GM12878 (cell line): ENCODE measurements at regions of chr5 and their contacts with region 1.

Region 1: DNA sequence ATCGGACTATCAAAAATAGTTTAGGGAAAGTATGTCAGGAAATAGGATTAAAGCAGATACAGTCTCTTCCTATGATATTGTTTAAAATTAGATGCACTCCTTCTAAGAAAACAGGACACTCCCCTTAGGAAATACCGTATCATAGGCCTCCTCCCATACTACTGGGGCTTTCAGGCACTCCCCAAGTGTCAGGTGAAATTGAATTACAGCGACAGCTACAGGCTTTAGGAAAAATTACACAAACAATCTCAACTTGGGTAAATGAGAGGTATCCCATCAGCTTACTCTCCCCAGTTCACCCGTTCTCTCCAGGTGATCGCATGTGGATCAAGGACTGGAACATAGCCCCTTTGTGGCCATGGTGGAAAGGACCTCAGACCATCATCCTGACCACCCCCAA is 110.4 kb upstream of the EPB41L4A start:
- DNase-seq: no peak
- ATAC-seq: peak; percentile 71
- H3K4me3 ChIP-seq: no peak overlapping the region
- H3K27ac ChIP-seq: no peak overlapping the region
- H3K4me1 ChIP-seq: peaks cover 26% of the 10 kb centered on the region
- H3K27me3 ChIP-seq: no peaks in the 10 kb centered on the region
- CTCF ChIP-seq: peak; percentile 57 to 61 (median 58); a peak in 5 of 6 replicates
- EP300 ChIP-seq: no peak
- POLR2A ChIP-seq: no peak
- RAD21 ChIP-seq: peak; percentile 65

Region 2: DNA sequence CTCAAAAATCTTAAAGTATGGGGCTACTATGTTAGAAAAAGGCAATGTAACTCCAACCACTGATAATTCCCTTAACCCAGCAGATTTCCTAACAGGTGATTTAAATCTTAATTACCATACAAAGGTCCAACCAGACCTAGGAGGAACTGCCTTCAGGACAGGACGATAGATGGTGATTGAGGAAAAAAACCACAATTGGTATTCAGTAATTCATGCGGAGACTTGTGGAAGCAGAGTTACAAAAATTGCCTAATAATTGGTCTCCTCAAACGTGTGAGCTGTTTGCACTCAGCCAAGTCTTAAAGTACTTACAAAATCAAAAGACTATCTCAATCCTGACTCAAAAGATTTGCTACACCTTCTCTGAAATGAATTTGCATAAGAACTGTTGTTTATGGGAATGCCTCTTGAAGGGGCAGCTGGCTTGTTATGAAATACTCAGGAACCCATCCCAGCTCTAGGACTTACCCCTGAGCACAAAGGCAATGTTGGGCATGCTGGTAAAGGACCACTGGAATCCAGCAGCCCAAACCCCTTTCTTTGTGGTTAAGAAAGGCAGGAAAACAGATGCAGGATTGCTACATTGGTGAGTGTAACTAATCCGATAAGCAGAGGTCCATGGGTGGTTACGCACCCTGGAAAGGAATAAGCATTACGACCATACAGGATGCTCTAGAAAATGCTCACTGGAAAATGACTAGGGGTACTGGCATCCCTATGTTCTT is 83.7 kb before region 1 on chr5:
- CTCF ChIA-PET with region 1: no interaction called
- POLR2A ChIA-PET with region 1: no interaction called
- RAD21 ChIA-PET with region 1: no interaction called
- SMC1A ChIA-PET with region 1: no interaction called
- in situ Hi-C with region 1: no loop called
- intact Hi-C with region 1: no loop called
- DNase-seq: no peak
- ATAC-seq: no peak
- H3K4me3 ChIP-seq: no peak overlapping the region
- H3K27ac ChIP-seq: no peak overlapping the region
- H3K4me1 ChIP-seq: no peaks in the 10 kb centered on the region
- H3K27me3 ChIP-seq: no peaks in the 10 kb centered on the region
- CTCF ChIP-seq: no peak
- EP300 ChIP-seq: no peak
- POLR2A ChIP-seq: no peak
- RAD21 ChIP-seq: no peak

Region 3: GRCh38 chr5:112479407-112479806 is 50.1 kb before region 1 on chr5:
- CTCF ChIA-PET with region 1: interaction called, 7 read pairs
- POLR2A ChIA-PET with region 1: interaction called, 3 read pairs
- RAD21 ChIA-PET with region 1: interaction called, 4 read pairs
- SMC1A ChIA-PET with region 1: interaction called, 10 read pairs
- in situ Hi-C with region 1: no loop called
- intact Hi-C with region 1: no loop called
- DNase-seq: no peak
- ATAC-seq: peak; percentile 57
- H3K4me3 ChIP-seq: no peak overlapping the region
- H3K27ac ChIP-seq: no peak overlapping the region
- H3K4me1 ChIP-seq: no peaks in the 10 kb centered on the region
- H3K27me3 ChIP-seq: no peaks in the 10 kb centered on the region
- CTCF ChIP-seq: no peak
- EP300 ChIP-seq: no peak
- POLR2A ChIP-seq: no peak
- RAD21 ChIP-seq: no peak

Region 4: GRCh38 chr5:112511920-112512319 is 17.6 kb before region 1 on chr5:
- CTCF ChIA-PET with region 1: interaction called, 85 read pairs
- POLR2A ChIA-PET with region 1: interaction called, 3 read pairs
- RAD21 ChIA-PET with region 1: interaction called, 4 read pairs
- SMC1A ChIA-PET with region 1: interaction called, 54 read pairs
- in situ Hi-C with region 1: no loop called
- intact Hi-C with region 1: no loop called
- DNase-seq: no peak
- ATAC-seq: no peak
- H3K4me3 ChIP-seq: no peak overlapping the region
- H3K27ac ChIP-seq: no peak overlapping the region
- H3K4me1 ChIP-seq: no peaks in the 10 kb centered on the region
- H3K27me3 ChIP-seq: no peaks in the 10 kb centered on the region
- CTCF ChIP-seq: no peak
- EP300 ChIP-seq: no peak
- POLR2A ChIP-seq: no peak
- RAD21 ChIP-seq: no peak